ENCODE measurements at regions of chr1 and their contacts with region 1.

Region 1: DNA sequence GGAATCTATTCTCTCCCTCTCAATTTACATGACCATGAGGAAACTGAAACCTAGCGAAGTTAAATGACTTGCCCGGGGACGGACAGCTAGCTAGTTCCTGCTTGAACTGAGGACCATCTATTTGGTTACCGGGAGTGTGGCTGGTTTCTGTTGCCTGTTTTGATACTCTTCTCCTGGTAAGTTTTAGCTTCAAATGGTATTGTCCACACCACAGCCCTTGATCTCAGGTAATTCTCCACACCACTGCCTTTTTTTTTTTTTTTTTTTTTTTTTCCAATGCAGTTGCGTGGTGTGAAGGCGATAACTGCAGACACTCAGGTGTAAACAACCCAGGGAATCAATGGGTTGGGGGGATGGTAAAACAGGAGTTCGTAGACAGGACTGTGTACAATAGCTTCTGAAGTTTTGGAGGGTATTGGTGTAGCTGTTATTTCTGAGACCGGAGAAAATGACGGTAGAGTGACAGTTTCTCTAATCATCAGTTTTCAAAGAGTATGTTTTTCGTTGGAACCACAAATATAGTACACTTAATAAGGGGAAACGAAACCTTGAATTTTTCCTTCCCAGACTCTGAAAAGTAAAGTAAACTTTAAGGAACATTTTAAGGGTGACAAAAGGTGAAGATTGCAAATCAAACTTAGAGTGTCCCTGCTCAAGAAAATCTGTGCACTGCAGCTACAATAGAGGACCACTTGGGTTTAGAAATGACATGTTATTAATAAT is 125.3 kb upstream of the CACYBP start:
- DNase-seq: no peak
- ATAC-seq: peak; percentile 42
- H3K4me3 Mint-ChIP-seq: peak overlapping the region; percentile 83
- H3K27ac Mint-ChIP-seq: peak overlapping the region; percentile 72
- H3K4me1 Mint-ChIP-seq: peaks cover 59% of the 10 kb centered on the region
- H3K27me3 Mint-ChIP-seq: no peaks in the 10 kb centered on the region
- CTCF ChIP-seq: no peak

Region 2: DNA sequence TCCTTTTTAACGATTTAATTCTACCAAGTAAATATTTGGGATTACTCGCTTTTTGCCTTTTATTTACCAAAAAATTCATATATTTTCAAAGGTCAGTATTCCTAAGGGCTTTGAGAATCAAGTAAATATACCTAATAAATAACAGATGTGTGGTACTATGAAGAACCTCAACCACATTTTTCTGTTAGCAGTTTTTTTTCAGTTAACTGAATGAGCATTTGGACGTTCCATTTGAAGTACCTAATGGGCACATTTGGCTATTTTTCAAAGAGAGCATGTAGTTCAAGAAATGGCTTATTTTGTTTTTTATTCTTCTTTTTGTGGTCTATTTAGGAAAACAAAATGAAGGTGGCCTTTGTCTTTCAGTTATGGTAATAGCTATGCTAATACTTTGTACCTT is 173.7 kb before region 1 on chr1:
- CTCF ChIA-PET with region 1: no interaction called
- POLR2A ChIA-PET with region 1: no interaction called
- intact Hi-C with region 1: no loop called
- DNase-seq: no peak
- ATAC-seq: no peak
- H3K4me3 Mint-ChIP-seq: no peak overlapping the region
- H3K27ac Mint-ChIP-seq: no peak overlapping the region
- H3K4me1 Mint-ChIP-seq: peaks cover 5% of the 10 kb centered on the region
- H3K27me3 Mint-ChIP-seq: no peaks in the 10 kb centered on the region
- CTCF ChIP-seq: no peak

Region 3: GRCh38 chr1:174769961-174770549 is 104.4 kb before region 1 on chr1:
- CTCF ChIA-PET with region 1: no interaction called
- POLR2A ChIA-PET with region 1: no interaction called
- intact Hi-C with region 1: loop called (anchors 5 kb)
- DNase-seq: no peak
- ATAC-seq: peak; percentile 52
- H3K4me3 Mint-ChIP-seq: no peak overlapping the region
- H3K27ac Mint-ChIP-seq: no peak overlapping the region
- H3K4me1 Mint-ChIP-seq: peaks cover 6% of the 10 kb centered on the region
- H3K27me3 Mint-ChIP-seq: no peaks in the 10 kb centered on the region
- CTCF ChIP-seq: no peak

Region 4: DNA sequence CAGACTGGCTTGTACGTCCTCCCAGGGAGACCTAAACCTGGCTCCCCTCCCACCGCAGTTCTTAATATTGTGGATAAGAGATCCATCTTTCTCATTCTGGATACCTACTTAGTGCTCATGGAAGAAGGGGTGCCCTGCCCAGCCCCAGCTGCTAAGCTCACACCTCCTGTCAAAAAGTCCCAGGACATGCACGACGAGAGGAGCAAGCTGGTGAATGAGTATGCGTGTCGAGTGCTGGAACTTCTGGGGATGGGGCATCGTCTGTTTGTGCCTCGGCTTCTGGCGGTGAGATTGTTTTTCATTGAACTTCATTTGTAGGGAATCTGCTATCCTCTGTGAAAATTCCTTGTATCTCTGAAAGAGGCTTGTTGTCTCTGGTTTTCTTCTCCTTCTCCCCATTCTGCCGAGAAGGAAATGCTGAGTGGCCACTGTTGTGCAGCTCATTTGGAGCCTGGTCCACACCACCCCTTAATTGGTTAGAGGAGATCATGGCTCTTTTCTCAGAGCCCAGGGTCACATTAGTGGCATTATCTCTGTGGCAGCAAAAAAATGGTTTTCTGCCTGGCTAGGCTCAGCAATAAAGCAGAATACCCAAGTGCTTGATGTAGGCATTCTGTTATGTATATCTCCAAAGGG is 74.2 kb before region 1 on chr1:
- CTCF ChIA-PET with region 1: interaction called, 4 read pairs
- POLR2A ChIA-PET with region 1: interaction called, 16 read pairs
- intact Hi-C with region 1: loop called (anchors 5 kb)
- DNase-seq: no peak
- ATAC-seq: no peak
- H3K4me3 Mint-ChIP-seq: no peak overlapping the region
- H3K27ac Mint-ChIP-seq: no peak overlapping the region
- H3K4me1 Mint-ChIP-seq: peaks cover 11% of the 10 kb centered on the region
- H3K27me3 Mint-ChIP-seq: no peaks in the 10 kb centered on the region
- CTCF ChIP-seq: no peak

Region 5: DNA sequence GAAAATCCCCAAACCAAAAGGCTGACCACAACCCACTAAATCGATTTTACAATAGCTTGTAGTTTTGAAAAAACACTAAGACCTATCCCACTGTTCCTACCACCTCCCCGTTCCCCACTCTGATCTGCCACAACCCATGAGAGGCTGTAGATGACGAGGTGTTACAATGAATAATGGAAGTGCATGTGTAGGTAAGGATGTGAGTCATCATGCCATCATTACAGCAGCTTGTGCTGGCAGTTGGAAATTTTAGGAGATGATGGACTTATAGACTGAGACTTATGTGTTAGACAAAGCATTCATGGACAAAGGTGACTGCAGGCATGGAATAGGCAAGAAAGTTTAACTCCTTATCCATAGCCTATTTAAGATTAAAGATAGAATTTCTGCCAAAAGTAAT is 59.5 kb before region 1 on chr1:
- CTCF ChIA-PET with region 1: no interaction called
- POLR2A ChIA-PET with region 1: no interaction called
- intact Hi-C with region 1: loop called (anchors 5 kb)
- DNase-seq: no peak
- ATAC-seq: peak; percentile 42
- H3K4me3 Mint-ChIP-seq: no peak overlapping the region
- H3K27ac Mint-ChIP-seq: peak overlapping the region; percentile 67
- H3K4me1 Mint-ChIP-seq: peaks cover 31% of the 10 kb centered on the region
- H3K27me3 Mint-ChIP-seq: no peaks in the 10 kb centered on the region
- CTCF ChIP-seq: no peak

Region 6: GRCh38 chr1:174858301-174858700 is 16.2 kb before region 1 on chr1:
- CTCF ChIA-PET with region 1: no interaction called
- POLR2A ChIA-PET with region 1: interaction called, 10 read pairs
- intact Hi-C with region 1: no loop called
- DNase-seq: no peak
- ATAC-seq: no peak
- H3K4me3 Mint-ChIP-seq: no peak overlapping the region
- H3K27ac Mint-ChIP-seq: no peak overlapping the region
- H3K4me1 Mint-ChIP-seq: no peaks in the 10 kb centered on the region
- H3K27me3 Mint-ChIP-seq: no peaks in the 10 kb centered on the region
- CTCF ChIP-seq: no peak

Region 7: DNA sequence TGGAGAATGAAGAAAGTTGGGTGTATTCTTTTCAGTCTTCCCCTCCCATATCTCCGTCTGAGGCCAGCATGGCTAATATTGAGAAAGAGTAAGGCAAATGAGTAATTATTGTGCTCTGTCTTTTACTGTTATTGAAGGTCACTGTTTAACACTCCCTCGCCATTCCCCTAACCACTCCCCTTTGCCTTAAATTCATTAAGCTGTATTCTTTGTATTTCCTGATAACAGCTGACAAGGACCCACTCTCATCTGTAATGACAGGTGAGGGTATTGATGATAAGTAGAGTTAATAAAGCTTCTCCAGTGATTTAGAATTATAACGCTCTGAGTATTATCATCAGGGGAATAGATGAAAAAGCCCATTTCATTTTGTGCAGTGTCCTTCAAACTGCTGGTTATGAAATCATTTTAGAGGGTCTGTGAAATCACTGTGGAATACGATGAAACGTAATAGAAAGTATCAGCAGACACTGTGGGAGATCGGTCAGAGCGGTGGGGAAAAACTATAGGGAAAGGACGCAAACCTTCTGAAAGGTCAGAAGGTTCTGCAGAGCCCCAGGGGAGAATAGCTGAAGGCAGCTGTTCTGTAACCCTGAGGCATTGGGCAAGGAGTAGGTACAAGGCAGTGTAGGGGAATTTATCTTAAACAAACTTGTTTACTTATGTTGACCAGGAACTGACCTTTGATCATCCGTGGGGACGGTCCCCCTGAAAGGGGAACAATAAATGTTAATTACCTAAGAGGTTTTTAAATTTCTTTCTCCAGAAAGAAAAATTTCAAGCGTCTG is 79.0 kb after region 1 on chr1:
- CTCF ChIA-PET with region 1: no interaction called
- POLR2A ChIA-PET with region 1: interaction called, 3 read pairs
- intact Hi-C with region 1: loop called (anchors 5 kb)
- DNase-seq: no peak
- ATAC-seq: peak; percentile 67
- H3K4me3 Mint-ChIP-seq: peak overlapping the region; percentile 70
- H3K27ac Mint-ChIP-seq: peak overlapping the region; percentile 79
- H3K4me1 Mint-ChIP-seq: peaks cover 51% of the 10 kb centered on the region
- H3K27me3 Mint-ChIP-seq: no peaks in the 10 kb centered on the region
- CTCF ChIP-seq: no peak

Region 8: GRCh38 chr1:174982971-174983689 is 108.6 kb after region 1 on chr1:
- CTCF ChIA-PET with region 1: interaction called, 3 read pairs
- POLR2A ChIA-PET with region 1: interaction called, 3 read pairs
- intact Hi-C with region 1: loop called (anchors 5 kb)
- DNase-seq: no peak
- ATAC-seq: no peak
- H3K4me3 Mint-ChIP-seq: no peak overlapping the region
- H3K27ac Mint-ChIP-seq: no peak overlapping the region
- H3K4me1 Mint-ChIP-seq: peaks cover 10% of the 10 kb centered on the region
- H3K27me3 Mint-ChIP-seq: no peaks in the 10 kb centered on the region
- CTCF ChIP-seq: peak; percentile 48